ENCODE measurements at regions of chr17 and their contacts with region 1.

Region 1: GRCh38 chr17:39742926-39743436 is 5.2 kb downstream of the GRB7 start:
- DNase-seq: no peak
- ATAC-seq: no peak
- H3K4me3 ChIP-seq: no peak overlapping the region
- H3K4me3 Mint-ChIP-seq: no peak overlapping the region
- H3K27ac ChIP-seq: no peak overlapping the region
- H3K27ac Mint-ChIP-seq: no peak overlapping the region
- H3K4me1 ChIP-seq: peaks cover 18% of the 10 kb centered on the region
- H3K4me1 Mint-ChIP-seq: peaks cover 6% of the 10 kb centered on the region
- H3K27me3 ChIP-seq: peaks cover 4 to 12% of the 10 kb centered on the region in 2 experiments
- H3K27me3 Mint-ChIP-seq: peaks cover 20% of the 10 kb centered on the region
- CTCF ChIP-seq: no peak

Region 2: DNA sequence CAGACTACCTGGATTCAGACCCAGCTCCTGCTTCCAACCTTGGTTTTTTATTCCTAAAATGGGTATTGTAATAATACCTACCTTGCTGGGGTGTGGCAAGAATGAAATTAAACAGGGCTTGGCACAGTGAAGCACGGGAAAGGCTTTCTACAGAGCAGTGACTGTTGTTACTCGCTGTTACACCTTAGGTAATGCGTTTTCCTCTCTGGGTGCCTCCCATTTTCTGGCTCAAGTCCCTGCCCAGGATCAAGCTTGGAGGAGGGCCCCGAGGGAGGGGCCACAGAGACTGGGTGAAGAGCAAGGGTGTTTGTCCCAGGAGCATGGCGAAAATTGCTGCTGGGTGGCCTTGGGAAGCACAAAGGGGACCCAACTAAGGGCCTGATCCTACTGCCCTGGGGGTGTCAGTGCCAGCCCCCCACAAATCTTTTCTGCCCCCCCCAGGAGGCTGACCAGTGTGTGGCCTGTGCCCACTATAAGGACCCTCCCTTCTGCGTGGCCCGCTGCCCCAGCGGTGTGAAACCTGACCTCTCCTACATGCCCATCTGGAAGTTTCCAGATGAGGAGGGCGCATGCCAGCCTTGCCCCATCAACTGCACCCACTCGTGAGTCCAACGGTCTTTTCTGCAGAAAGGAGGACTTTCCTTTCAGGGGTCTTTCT is 26.0 kb before region 1 on chr17:
- CTCF ChIA-PET with region 1: no interaction called
- POLR2A ChIA-PET with region 1: no interaction called
- intact Hi-C with region 1: loop called in 1 of 2 experiments (anchors 1 kb)
- DNase-seq: no peak
- ATAC-seq: no peak
- H3K4me3 ChIP-seq: no peak overlapping the region
- H3K4me3 Mint-ChIP-seq: no peak overlapping the region
- H3K27ac ChIP-seq: no peak overlapping the region
- H3K27ac Mint-ChIP-seq: no peak overlapping the region
- H3K4me1 ChIP-seq: no peaks in the 10 kb centered on the region
- H3K4me1 Mint-ChIP-seq: no peaks in the 10 kb centered on the region
- H3K27me3 ChIP-seq: no peaks in the 10 kb centered on the region
- H3K27me3 Mint-ChIP-seq: no peaks in the 10 kb centered on the region
- CTCF ChIP-seq: no peak

Measured in CD4-positive, alpha-beta T cell (primary cell).